Activated T-helper 1 cell treated with anti-CD3 and anti-CD28 coated beads, Interleukin-12 subunit alpha, Interleukin-12 subunit beta, Interleukin-2, Interleukin-4 antibody, amounts not matched to agents 30 ng/mL and 10 ng/mL and 1 ng/mL, durations not matched to agents 14 hours and 24 hours and 36 hours (primary cell): ENCODE measurements at regions of chr1 and their contacts with region 1.

Region 1: DNA sequence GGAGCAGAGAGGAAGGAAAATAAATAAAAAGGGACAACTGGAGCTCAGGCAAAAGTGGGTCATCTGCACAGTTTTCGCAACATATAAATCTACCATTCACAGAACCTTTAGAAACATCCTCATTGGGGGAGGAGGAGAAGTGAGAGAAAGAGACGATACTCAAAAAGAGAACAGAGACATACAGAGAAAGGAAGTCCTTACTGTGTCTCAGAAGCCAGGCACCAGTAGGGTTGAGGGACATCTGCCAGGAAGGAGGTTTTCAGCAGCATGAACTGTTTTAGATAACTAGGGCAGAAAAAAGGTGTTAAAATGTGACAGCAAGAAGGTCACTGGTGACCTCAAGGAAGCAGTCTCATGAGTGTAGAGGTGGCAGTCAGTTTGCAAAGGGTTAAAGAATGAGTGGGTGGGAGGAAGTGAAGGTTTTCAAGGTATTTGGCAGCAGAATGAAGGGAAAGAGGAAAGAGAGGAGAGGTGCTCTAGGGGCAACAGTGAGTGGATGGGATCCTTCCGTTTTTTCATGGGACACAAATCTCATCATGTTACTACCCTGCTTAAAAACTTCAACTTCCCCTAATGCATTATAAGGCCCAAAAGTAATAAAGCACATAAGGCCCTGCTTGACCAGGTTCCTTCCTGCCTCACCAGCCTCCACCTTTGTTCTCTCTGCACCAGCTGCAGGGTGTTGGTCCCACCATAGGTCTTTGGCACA is 9.5 kb downstream of the JAK1 start:
- DNase-seq: peak; percentile 14
- H3K4me3 Mint-ChIP-seq: no peak overlapping the region
- H3K27ac Mint-ChIP-seq: no peak overlapping the region
- H3K4me1 Mint-ChIP-seq: peaks cover 63% of the 10 kb centered on the region
- H3K27me3 Mint-ChIP-seq: no peaks in the 10 kb centered on the region

Region 2: DNA sequence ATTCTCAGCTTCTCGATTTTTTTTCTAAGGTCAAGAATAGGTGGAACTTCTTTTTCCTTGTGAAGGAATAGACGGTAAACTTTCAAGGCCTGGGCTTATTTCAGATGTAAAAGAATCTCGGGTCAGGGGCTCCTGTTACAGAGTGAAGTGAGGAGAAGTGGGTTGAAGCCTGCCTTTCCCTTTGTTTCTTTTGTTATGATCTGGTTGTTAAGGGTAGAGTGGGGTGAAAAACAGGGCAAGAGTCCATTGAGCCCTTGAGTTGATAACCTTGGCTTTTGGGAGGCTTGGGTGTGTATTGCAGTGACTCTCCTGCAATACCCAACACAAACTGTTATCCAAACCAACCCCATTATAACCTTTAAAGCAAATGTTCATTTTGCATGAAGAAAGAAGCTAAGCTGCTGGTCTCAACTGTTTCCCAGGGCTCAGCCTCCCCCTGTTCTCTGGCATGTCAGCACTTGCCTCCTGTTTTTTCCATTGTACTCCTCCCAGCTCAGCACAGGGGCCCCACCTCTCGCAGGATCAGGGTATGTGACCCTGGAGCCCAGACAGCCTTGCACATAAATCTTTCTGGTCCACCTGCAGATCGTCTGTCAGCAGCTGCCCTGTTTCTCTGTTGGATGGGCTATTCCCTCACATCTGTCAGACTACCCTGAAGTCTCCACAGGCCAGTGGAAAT is 384.5 kb before region 1 on chr1:
- intact Hi-C with region 1: no loop called
- DNase-seq: no peak
- H3K4me3 Mint-ChIP-seq: no peak overlapping the region
- H3K27ac Mint-ChIP-seq: no peak overlapping the region
- H3K4me1 Mint-ChIP-seq: no peaks in the 10 kb centered on the region
- H3K27me3 Mint-ChIP-seq: no peaks in the 10 kb centered on the region

Region 3: GRCh38 chr1:64701886-64702285 is 255.0 kb before region 1 on chr1:
- intact Hi-C with region 1: no loop called
- DNase-seq: no peak
- H3K4me3 Mint-ChIP-seq: no peak overlapping the region
- H3K27ac Mint-ChIP-seq: no peak overlapping the region
- H3K4me1 Mint-ChIP-seq: no peaks in the 10 kb centered on the region
- H3K27me3 Mint-ChIP-seq: peaks cover 5% of the 10 kb centered on the region

Region 4: GRCh38 chr1:64766385-64766784 is 190.5 kb before region 1 on chr1:
- intact Hi-C with region 1: no loop called
- DNase-seq: no peak
- H3K4me3 Mint-ChIP-seq: no peak overlapping the region
- H3K27ac Mint-ChIP-seq: no peak overlapping the region
- H3K4me1 Mint-ChIP-seq: no peaks in the 10 kb centered on the region
- H3K27me3 Mint-ChIP-seq: peaks cover 2% of the 10 kb centered on the region

Region 5: DNA sequence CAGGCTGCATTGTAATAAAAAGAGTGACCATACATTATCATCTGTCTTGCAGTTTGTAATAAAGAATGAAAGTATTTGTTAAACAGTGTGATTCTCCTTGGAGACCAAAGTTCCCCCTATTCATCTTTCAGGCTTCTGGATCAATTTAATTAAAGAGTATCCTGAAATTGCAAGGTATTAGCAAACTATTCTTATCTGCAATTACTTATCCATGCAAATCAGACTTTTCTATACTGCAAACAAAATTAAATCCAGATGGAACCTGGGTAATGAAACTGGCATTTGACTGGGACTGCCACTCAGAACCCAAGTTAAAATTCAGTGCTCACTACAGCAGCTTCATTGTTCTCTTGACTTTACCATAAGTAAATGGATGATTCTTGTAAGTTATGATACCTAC is 27.7 kb before region 1 on chr1:
- intact Hi-C with region 1: loop called (anchors 1 kb)
- DNase-seq: no peak
- H3K4me3 Mint-ChIP-seq: no peak overlapping the region
- H3K27ac Mint-ChIP-seq: no peak overlapping the region
- H3K4me1 Mint-ChIP-seq: peaks cover 78% of the 10 kb centered on the region
- H3K27me3 Mint-ChIP-seq: no peaks in the 10 kb centered on the region

Region 6: GRCh38 chr1:64940025-64940424 is 16.9 kb before region 1 on chr1:
- intact Hi-C with region 1: loop called (anchors 1 kb)
- DNase-seq: no peak
- H3K4me3 Mint-ChIP-seq: no peak overlapping the region
- H3K27ac Mint-ChIP-seq: no peak overlapping the region
- H3K4me1 Mint-ChIP-seq: peaks cover 38% of the 10 kb centered on the region
- H3K27me3 Mint-ChIP-seq: no peaks in the 10 kb centered on the region

Region 7: DNA sequence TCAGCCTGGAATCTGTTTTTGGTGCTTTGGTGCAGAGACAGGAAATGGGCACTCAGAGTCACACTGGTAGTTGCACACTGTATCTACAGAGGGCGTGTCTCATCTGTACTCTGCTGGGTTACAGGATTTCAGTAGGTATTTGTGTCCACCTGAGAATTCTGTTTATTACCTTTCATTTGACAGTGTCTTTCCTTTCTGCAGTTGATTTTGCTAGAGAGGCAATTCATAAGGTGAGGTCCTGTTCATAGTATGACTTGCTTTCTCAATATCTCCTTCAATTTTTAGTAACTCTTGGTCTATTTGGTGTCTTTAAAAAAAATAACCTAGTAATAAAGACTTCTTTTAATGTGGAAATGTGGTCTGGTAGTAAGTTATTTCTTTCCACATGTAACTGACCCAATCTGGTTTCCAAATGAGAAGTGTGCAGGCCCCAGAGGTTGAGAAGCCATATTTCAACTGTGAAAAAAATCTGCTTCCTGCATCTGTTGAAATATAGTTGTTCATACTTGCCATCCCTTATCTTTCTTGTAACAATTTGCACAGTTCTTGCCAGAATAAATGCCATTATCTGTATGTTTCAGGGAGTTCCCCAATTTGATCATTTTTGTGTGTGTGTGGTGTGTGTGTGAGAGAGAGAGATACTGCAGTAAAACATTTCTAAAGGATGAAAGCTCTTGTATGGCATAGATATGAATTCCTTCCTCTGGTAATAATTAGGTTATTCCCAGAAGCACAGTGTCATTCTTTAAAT is 274.0 kb after region 1 on chr1:
- intact Hi-C with region 1: loop called (anchors 5 kb)
- DNase-seq: no peak
- H3K4me3 Mint-ChIP-seq: no peak overlapping the region
- H3K27ac Mint-ChIP-seq: peak overlapping the region; percentile 81
- H3K4me1 Mint-ChIP-seq: peaks cover 32% of the 10 kb centered on the region
- H3K27me3 Mint-ChIP-seq: no peaks in the 10 kb centered on the region

Region 8: GRCh38 chr1:65339866-65340468 is 383.1 kb after region 1 on chr1:
- intact Hi-C with region 1: no loop called
- DNase-seq: no peak
- H3K4me3 Mint-ChIP-seq: no peak overlapping the region
- H3K27ac Mint-ChIP-seq: no peak overlapping the region
- H3K4me1 Mint-ChIP-seq: no peaks in the 10 kb centered on the region
- H3K27me3 Mint-ChIP-seq: no peaks in the 10 kb centered on the region